SK-N-SH (cell line): ENCODE measurements at regions of chr3 and their contacts with region 1.

Region 1: DNA sequence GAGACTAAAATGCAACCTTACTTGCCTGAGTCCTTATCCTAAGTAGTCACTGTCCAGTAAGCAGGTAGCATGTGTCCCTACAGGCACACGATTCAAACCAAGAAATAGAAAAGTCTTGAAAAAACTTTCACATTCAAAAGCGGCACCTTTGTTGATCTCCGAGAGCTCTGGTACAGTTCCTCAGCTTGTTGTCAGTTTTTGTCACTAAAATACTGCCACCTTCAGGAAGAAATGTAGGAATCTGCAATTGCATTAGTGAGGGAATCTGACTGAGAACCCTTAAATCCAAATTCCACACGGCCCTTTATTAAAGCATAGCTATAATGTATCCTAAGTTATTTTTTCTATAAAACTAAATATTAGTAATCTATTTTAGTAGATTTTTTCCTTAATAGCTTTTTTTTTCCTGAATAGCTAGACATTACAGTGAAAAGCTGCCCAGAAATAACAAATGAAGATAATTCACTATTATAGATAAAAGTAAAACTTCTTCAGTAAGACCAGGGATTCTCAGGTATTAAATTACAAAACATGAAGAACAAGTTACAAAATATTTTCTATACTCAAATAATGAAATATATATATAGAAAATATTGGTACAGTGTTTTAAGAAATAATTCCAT is 44.0 kb downstream of the CCDC54 start:
- DNase-seq: peak; percentile 50
- H3K4me3 ChIP-seq: peak overlapping the region; percentile 38 to 59
- H3K27ac ChIP-seq: no peak overlapping the region
- H3K4me1 ChIP-seq: peaks cover 0 to 2% of the 10 kb centered on the region in 2 experiments; a peak in 1 of 4 replicates
- H3K27me3 ChIP-seq: no peaks in the 10 kb centered on the region
- CTCF ChIP-seq: peak; percentile 79
- EP300 ChIP-seq: no peak
- RAD21 ChIP-seq: peak; percentile 77

Region 2: DNA sequence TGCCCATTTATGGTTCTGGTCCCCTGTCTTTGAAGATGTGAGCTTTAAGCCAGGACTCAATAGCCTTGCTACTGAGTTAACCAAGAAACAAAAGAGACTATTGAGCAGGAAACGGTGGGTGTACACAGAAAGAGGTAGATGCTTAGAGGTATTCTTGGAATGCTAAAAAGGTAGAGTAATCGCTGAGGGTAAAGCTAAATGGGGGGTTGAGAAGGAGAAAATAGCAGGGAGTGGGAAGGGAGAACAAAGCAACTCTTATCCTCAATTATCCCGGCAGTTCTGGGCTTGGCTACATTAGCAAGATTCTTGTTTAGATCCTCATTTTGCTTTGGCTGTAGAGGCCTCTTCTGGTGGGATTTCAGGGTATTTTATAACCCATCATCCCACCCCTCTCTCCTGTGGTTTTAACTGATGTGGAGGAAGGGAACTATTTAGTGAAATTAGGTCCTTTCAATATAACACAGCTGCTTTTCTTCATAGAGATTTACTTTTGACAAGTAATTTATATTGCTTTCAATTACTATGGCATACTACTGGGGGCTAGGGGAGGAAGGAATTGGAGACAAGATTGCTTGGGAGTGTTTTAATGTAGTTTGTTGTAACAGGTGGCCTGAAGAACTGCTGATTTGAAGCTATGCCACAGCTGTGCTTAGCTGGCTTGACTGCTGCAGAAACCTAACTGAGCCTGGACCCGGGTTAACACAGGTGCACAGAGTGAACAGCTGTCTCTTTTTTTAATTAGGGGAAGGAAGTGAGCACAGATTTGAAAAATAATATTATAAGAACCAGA is 278.3 kb before region 1 on chr3:
- CTCF ChIA-PET with region 1: no interaction called
- POLR2A ChIA-PET with region 1: no interaction called
- DNase-seq: no peak
- H3K4me3 ChIP-seq: no peak overlapping the region
- H3K27ac ChIP-seq: no peak overlapping the region
- H3K4me1 ChIP-seq: no peaks in the 10 kb centered on the region; a peak in 1 of 4 replicates
- H3K27me3 ChIP-seq: no peaks in the 10 kb centered on the region
- CTCF ChIP-seq: no peak
- EP300 ChIP-seq: no peak
- RAD21 ChIP-seq: no peak

Region 3: GRCh38 chr3:107235928-107236315 is 185.4 kb before region 1 on chr3:
- CTCF ChIA-PET with region 1: interaction called, 25 read pairs
- POLR2A ChIA-PET with region 1: interaction called, 4 read pairs
- DNase-seq: peak; percentile 75
- H3K4me3 ChIP-seq: peak overlapping the region; percentile 37 to 53
- H3K27ac ChIP-seq: peak overlapping the region; percentile 45 to 62; a peak in 3 of 4 replicates
- H3K4me1 ChIP-seq: peaks cover 0 to 10% of the 10 kb centered on the region in 2 experiments; a peak in 2 of 4 replicates
- H3K27me3 ChIP-seq: no peaks in the 10 kb centered on the region
- CTCF ChIP-seq: peak; percentile 95
- EP300 ChIP-seq: no peak
- RAD21 ChIP-seq: peak; percentile 99

Region 4: GRCh38 chr3:107265526-107265925 is 155.8 kb before region 1 on chr3:
- CTCF ChIA-PET with region 1: interaction called, 15 read pairs
- POLR2A ChIA-PET with region 1: no interaction called
- DNase-seq: no peak
- H3K4me3 ChIP-seq: no peak overlapping the region
- H3K27ac ChIP-seq: no peak overlapping the region
- H3K4me1 ChIP-seq: no peaks in the 10 kb centered on the region
- H3K27me3 ChIP-seq: no peaks in the 10 kb centered on the region
- CTCF ChIP-seq: no peak
- EP300 ChIP-seq: no peak
- RAD21 ChIP-seq: no peak

Region 5: DNA sequence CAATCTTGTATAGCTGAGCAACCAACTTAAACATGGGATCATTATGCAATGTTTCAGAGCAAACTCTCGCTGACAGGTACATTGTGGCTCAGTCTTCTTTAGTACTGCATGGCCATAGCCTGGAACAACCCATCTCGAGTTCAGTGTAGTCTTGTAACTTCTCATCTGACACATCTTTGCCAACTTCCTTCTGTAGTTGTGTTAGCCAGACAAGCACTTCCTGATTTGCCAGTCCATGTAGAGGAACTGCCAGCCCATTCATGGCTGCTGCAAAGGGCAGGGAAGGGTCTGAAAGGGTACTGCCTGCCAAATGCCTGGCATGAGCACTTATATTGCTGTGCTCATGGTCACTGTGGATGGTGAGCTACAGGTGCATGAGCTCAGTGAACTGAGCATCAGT is 93.2 kb before region 1 on chr3:
- CTCF ChIA-PET with region 1: no interaction called
- POLR2A ChIA-PET with region 1: no interaction called
- DNase-seq: no peak
- H3K4me3 ChIP-seq: no peak overlapping the region
- H3K27ac ChIP-seq: no peak overlapping the region
- H3K4me1 ChIP-seq: no peaks in the 10 kb centered on the region
- H3K27me3 ChIP-seq: no peaks in the 10 kb centered on the region
- CTCF ChIP-seq: no peak
- EP300 ChIP-seq: no peak
- RAD21 ChIP-seq: no peak

Region 6: GRCh38 chr3:107392549-107393165 is 28.6 kb before region 1 on chr3:
- CTCF ChIA-PET with region 1: interaction called, 10 read pairs
- POLR2A ChIA-PET with region 1: no interaction called
- DNase-seq: no peak
- H3K4me3 ChIP-seq: no peak overlapping the region
- H3K27ac ChIP-seq: peak overlapping the region in 1 of 2 experiments; percentile 40; a peak in 2 of 4 replicates
- H3K4me1 ChIP-seq: peaks cover 0 to 3% of the 10 kb centered on the region in 2 experiments; a peak in 2 of 4 replicates
- H3K27me3 ChIP-seq: no peaks in the 10 kb centered on the region
- CTCF ChIP-seq: no peak
- EP300 ChIP-seq: no peak
- RAD21 ChIP-seq: no peak

Region 7: DNA sequence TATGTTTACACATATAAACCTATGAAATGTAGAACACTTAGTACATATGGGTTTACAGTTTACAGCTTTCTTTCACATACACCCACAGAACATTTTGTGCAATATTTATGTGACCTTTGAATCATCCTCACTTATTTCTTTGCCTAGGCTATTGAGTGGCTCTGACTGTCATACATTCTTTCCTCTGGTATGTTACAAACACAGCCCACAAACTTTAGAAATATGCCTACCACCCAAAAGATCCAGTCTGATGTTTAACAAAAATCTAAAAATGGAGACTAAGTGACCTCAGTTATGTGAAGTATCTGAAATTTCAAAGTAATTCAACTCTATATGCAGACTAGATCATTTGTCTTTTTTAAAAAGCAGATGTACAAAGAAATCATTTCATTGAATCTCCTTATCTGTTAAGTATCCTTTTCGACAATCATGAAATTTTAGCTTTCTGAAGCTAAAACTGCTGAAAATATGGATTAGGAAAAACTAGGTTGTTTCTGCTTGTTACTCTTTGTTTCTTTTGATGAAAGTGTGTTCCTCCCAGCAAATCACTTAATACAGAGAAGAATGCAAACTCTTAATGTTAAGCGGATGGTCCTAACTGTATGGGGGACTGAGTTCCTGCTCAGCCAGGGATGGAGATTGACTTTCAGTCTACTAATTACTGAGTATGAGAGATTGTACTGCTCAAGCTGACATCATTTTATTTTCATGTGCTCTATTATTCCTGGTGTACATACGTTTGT is 16.4 kb before region 1 on chr3:
- CTCF ChIA-PET with region 1: interaction called, 15 read pairs
- POLR2A ChIA-PET with region 1: interaction called, 3 read pairs
- DNase-seq: no peak
- H3K4me3 ChIP-seq: no peak overlapping the region; a peak in 1 of 4 replicates
- H3K27ac ChIP-seq: peak overlapping the region; percentile 56 to 82; a peak in 3 of 4 replicates
- H3K4me1 ChIP-seq: peaks cover 0 to 6% of the 10 kb centered on the region in 2 experiments; a peak in 2 of 4 replicates
- H3K27me3 ChIP-seq: no peaks in the 10 kb centered on the region
- CTCF ChIP-seq: no peak
- EP300 ChIP-seq: peak in 1 of 2 experiments; percentile 56; a peak in 1 of 4 replicates
- RAD21 ChIP-seq: no peak

Region 8: GRCh38 chr3:107531917-107532469 is 110.7 kb after region 1 on chr3:
- CTCF ChIA-PET with region 1: no interaction called
- POLR2A ChIA-PET with region 1: no interaction called
- DNase-seq: no peak
- H3K4me3 ChIP-seq: no peak overlapping the region
- H3K27ac ChIP-seq: no peak overlapping the region
- H3K4me1 ChIP-seq: no peaks in the 10 kb centered on the region
- H3K27me3 ChIP-seq: no peaks in the 10 kb centered on the region
- CTCF ChIP-seq: no peak
- EP300 ChIP-seq: no peak
- RAD21 ChIP-seq: no peak